ENCODE measurements at regions of chr7 and their contacts with region 1.

Region 1: GRCh38 chr7:29408841-29409243 is 154.8 kb upstream of the PRR15 start:
- DNase-seq: peak in 1 of 2 donors; percentile 79
- H3K4me3 ChIP-seq: no peak overlapping the region
- CTCF ChIP-seq: peak in 1 of 3 donors; percentile 41
- POLR2A ChIP-seq: no peak

Region 2: DNA sequence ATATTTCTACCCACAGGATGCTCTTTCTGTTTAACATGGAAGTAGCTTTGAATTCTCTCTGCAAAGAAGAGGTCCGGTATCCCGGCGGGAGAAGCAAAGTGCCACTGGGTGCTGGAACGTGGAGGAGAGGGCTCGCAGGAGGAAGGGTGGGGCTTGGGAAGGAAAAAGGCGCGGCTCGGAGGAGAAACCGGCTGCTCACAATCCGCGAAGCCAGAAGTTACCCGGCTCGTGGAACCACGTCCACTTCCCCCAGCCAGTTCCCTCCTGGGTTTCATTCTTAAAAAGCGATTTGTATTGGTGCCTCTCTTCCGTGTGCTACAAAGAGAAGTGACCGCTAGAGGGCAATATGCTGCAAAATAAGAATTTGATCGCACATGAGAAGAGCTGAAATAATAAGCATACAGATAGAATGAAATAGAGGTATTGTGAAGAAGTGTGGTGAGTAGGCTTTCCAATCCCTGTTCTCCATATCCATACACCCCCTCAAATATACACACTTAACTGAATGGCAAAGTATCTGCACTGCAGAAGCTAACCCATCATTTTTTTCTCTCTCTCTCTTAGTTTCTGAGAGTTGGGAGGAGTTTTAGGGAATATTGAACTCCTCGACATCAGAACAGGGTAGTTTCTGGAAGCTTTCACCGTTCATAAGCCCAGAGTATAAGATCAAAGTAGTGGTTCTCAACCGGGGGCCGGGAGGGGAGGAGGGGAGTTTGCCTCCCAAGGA is 481.8 kb before region 1 on chr7:
- intact Hi-C with region 1: loop called (anchors 2 kb)
- DNase-seq: peak; percentile 80 to 92
- H3K4me3 ChIP-seq: no peak overlapping the region
- CTCF ChIP-seq: peak in 1 of 3 donors; percentile 61
- POLR2A ChIP-seq: no peak

Region 3: GRCh38 chr7:29113384-29114103 is 295.3 kb before region 1 on chr7:
- intact Hi-C with region 1: loop called (anchors 10 kb)
- DNase-seq: peak in 1 of 2 donors; percentile 56
- H3K4me3 ChIP-seq: no peak overlapping the region
- CTCF ChIP-seq: no peak
- POLR2A ChIP-seq: no peak

Region 4: DNA sequence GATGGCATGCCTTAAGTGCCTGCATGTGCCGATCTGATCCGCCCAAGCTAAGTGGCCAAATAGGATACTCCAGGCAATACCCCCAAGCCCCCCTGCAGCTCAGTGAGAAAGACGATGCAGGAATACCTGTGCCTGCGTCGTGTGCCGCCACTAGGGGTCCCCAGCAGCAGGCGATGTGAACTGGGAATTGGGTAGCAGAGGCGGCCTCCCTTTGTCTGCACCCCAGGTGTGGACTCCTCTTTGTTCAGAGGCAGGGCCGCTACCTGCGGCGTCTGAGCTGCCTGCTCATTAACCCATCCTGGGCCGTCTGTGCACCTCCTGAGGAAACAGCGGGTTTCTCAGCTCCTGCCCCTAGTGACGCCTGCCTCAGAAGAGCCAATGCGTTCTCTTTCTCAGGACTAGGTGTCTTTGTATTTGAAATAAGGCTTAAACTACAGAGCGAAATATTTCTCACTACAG is 219.1 kb before region 1 on chr7:
- intact Hi-C with region 1: loop called (anchors 5 kb)
- DNase-seq: peak; percentile 27 to 92
- H3K4me3 ChIP-seq: no peak overlapping the region
- CTCF ChIP-seq: peak in 1 of 3 donors; percentile 58
- POLR2A ChIP-seq: no peak

Region 5: DNA sequence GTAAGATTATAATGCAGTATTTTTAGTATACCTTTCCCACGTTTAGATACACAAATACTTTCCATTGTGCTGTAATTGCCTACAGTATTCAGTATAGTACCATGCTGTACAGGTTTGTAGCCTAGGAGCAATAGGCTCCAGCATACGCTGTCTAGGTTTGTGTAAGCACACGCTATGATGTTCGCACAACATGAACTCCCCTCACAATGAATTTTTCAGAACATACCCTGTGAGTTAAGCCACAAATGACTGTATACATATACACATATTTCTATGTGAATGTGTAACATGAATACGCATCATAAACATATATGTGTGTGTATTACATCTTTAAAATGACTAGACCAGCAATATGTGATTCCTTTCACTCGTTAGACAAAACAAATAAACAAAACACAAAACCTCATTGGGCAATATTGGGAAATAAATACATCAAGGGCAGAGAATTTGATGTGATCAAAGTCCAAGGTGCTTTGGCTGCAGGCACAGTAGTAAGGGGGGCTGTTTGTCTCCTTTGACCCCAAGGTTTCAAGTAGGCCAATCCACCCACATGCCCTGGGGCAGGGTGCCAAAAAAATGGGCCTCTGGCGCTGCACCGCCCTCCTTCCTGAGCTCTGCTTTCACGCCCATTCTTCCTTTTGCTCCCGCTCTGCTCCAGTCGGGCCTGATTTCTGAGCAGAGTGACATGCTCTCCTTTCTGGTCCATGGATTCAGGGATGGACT is 180.4 kb before region 1 on chr7:
- intact Hi-C with region 1: no loop called
- DNase-seq: no peak
- H3K4me3 ChIP-seq: no peak overlapping the region
- CTCF ChIP-seq: no peak
- POLR2A ChIP-seq: no peak

Region 6: DNA sequence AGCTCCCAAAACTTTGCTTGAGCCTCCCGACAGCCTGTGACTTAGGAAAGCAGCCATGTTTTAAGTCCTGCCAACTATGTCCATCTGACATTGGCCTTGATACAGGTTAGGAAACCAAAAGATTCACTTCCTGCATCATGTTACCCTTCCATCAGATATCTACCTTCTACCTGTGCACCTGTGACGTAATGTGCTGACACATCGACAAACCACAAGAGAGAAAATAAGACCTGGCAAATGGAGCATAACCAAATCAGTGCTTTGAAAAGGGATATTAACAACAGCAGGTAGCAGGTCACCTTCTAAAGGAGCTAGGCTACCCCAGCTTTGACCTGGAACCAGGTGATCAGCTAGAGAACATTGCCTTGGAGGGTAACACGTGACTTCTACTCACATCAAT is 140.0 kb after region 1 on chr7:
- intact Hi-C with region 1: no loop called
- DNase-seq: no peak
- H3K4me3 ChIP-seq: no peak overlapping the region
- CTCF ChIP-seq: no peak
- POLR2A ChIP-seq: no peak

Region 7: GRCh38 chr7:30459591-30460257 is 1050.9 kb after region 1 on chr7:
- intact Hi-C with region 1: no loop called
- DNase-seq: peak in 1 of 2 donors; percentile 93
- H3K4me3 ChIP-seq: no peak overlapping the region
- CTCF ChIP-seq: no peak
- POLR2A ChIP-seq: no peak

Measured in lower leg skin (tissue), 4 donors.